ENCODE measurements at regions of chr3 and their contacts with region 1.

Region 1: GRCh38 chr3:113051302-113051711 is 60.5 kb downstream of the GTPBP8 start:
- DNase-seq: peak; percentile 63 to 82
- H3K4me3 ChIP-seq: no peak overlapping the region
- H3K27ac ChIP-seq: no peak overlapping the region
- H3K4me1 ChIP-seq: no peaks in the 10 kb centered on the region; the same call in 1 of the 2 replicates
- H3K27me3 ChIP-seq: no peaks in the 10 kb centered on the region
- CTCF ChIP-seq: peak; percentile 94

Region 2: GRCh38 chr3:112948346-112948838 is 102.9 kb before region 1 on chr3:
- CTCF ChIA-PET with region 1: no interaction called
- POLR2A ChIA-PET with region 1: no interaction called
- intact Hi-C with region 1: no loop called
- DNase-seq: no peak
- H3K4me3 ChIP-seq: no peak overlapping the region
- H3K27ac ChIP-seq: no peak overlapping the region
- H3K4me1 ChIP-seq: no peaks in the 10 kb centered on the region
- H3K27me3 ChIP-seq: no peaks in the 10 kb centered on the region
- CTCF ChIP-seq: no peak

Region 3: GRCh38 chr3:113136071-113136470 is 84.8 kb after region 1 on chr3:
- CTCF ChIA-PET with region 1: no interaction called
- POLR2A ChIA-PET with region 1: no interaction called
- intact Hi-C with region 1: loop called (anchors 10 kb)
- DNase-seq: no peak
- H3K4me3 ChIP-seq: no peak overlapping the region
- H3K27ac ChIP-seq: no peak overlapping the region
- H3K4me1 ChIP-seq: no peaks in the 10 kb centered on the region
- H3K27me3 ChIP-seq: no peaks in the 10 kb centered on the region
- CTCF ChIP-seq: peak; percentile 74

Region 4: DNA sequence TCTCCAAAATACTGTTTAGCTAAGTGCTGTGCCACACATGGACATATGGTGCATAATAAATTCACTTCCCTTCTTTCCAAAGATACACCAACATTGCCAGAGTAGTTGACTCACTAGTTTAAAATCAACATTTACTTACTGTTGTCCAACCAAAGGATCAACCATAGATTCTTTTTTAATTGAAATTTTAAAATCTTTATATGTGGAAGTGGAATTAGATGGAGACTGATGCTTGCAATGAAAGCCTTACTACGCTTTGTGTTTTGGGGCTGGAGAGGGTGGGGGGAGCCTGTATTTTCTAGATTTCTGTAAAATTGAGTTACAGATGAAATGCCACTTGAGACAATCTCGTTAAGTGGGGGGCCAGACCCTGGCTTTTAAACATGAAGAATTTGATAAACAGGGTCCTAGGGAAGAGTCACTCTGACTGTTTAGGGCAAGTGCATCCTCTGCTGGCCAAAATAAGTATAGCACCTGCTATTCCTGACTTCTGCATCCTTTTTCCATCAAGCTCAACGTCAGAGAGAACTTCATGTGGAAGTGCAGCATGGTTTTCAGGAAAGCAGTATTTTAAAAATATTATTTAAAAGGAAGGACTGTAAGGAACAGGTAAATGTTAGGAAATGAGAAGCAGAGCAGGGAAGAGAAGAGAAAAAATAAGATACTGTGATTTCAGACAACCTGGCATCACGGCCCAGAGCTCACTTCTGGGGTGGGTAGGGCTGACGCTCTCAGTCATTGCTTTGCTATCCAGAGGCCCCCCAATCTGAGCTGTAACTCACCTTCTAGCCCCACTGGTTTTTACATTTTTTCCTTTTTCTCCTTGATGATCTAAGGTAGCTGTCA is 236.7 kb after region 1 on chr3:
- CTCF ChIA-PET with region 1: interaction called, 5 read pairs
- POLR2A ChIA-PET with region 1: no interaction called
- intact Hi-C with region 1: loop called (anchors 1 kb)
- DNase-seq: peak in 1 of 2 experiments; percentile 54
- H3K4me3 ChIP-seq: no peak overlapping the region
- H3K27ac ChIP-seq: peak overlapping the region; percentile 54
- H3K4me1 ChIP-seq: peaks cover 12% of the 10 kb centered on the region
- H3K27me3 ChIP-seq: no peaks in the 10 kb centered on the region
- CTCF ChIP-seq: peak; percentile 99

Region 5: GRCh38 chr3:113575206-113575605 is 523.9 kb after region 1 on chr3:
- CTCF ChIA-PET with region 1: no interaction called
- POLR2A ChIA-PET with region 1: no interaction called
- intact Hi-C with region 1: loop called (anchors 1 kb)
- DNase-seq: no peak
- H3K4me3 ChIP-seq: no peak overlapping the region
- H3K27ac ChIP-seq: no peak overlapping the region
- H3K4me1 ChIP-seq: peaks cover 13% of the 10 kb centered on the region
- H3K27me3 ChIP-seq: no peaks in the 10 kb centered on the region
- CTCF ChIP-seq: no peak

Region 6: DNA sequence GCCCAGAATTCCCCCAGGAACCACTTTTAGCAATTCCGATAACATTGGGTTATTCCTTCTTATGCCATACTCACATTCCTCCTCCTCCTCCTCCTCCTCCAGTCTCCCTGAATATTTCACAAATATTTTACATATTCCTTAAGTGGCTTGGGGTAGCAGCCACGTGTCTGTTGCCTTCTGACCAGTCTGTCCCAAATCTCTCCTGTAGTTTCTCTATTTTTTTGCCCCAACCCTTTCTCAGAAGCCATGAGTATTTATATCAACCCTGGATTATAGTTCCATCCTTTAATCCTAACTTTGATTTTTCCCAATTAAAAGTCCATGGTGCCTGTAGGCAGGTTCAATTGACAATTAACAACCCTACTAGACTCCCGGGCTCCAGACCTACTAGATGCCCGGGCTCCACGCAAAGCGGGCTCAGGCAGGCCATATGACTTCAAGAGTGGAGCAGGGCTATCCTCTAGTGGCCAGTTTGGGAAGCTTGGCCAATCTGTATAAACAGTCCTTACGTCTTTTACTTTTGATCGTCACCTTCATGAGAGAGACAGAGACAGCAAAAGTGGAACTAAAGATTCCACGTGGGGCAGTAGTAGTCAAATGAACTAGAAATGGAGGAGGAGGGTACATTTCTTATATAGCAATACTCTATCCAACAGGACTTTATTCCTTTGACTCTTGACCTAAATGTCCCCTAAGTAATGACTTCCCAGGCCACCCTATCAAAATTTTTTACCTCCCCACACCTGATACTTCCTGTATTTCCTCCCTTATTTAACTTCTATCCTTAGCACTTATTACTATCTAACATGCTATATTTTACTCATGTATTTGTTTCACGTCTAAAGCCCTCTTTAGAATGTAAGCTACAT is 575.4 kb after region 1 on chr3:
- CTCF ChIA-PET with region 1: no interaction called
- POLR2A ChIA-PET with region 1: no interaction called
- intact Hi-C with region 1: loop called (anchors 1 kb)
- DNase-seq: peak; percentile 41
- H3K4me3 ChIP-seq: no peak overlapping the region
- H3K27ac ChIP-seq: no peak overlapping the region
- H3K4me1 ChIP-seq: 0 out of 2 replicates have a peak, but pooled peaks cover 4% of the 10 kb centered on the region
- H3K27me3 ChIP-seq: no peaks in the 10 kb centered on the region
- CTCF ChIP-seq: peak; percentile 86

Region 7: GRCh38 chr3:113912552-113913236 is 861.4 kb after region 1 on chr3:
- CTCF ChIA-PET with region 1: no interaction called
- POLR2A ChIA-PET with region 1: no interaction called
- intact Hi-C with region 1: loop called (anchors 5 kb)
- DNase-seq: peak; percentile 48 to 77
- H3K4me3 ChIP-seq: no peak overlapping the region
- H3K27ac ChIP-seq: no peak overlapping the region
- H3K4me1 ChIP-seq: peaks cover 4% of the 10 kb centered on the region; the same call in 1 of the 2 replicates
- H3K27me3 ChIP-seq: no peaks in the 10 kb centered on the region
- CTCF ChIP-seq: peak; percentile 84

Measured in PC-9 (cell line).